Activated CD8-positive, alpha-beta T cell treated with anti-CD3 and anti-CD28 coated beads for 36 hours (primary cell): ENCODE measurements at regions of chr1 and their contacts with region 1.

Region 1: DNA sequence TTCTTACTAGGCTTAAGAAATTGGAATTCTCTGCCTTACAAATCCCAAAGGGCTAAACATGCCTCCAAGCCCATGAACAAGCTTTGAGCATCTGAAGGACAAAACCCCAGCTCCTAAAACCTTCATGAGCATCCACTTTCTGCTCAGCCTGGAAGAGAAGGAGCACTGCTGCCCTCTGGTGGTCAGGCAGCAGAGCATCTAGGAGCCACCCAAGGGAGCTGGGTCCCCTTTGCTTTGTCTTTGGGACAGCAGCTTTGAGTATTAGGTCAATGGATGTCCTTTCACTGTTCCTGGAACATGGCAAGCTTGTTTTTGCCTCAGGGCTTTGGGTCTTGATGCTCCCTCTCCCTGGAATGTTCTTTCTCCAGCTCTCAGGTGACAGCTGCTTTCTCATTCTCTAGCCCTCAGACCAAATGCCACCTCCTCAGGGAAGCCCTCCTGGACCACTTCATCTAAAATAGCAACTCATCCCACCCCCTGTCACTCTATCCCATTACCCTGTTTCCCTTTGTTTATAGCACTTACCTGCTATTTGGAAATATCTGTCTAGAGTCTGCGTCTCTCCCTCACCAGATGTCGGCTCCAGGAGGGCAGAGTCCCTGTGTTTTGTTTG is 25.7 kb downstream of the RAB7B start:
- DNase-seq: peak; percentile 74
- ATAC-seq: peak; percentile 88
- H3K4me3 Mint-ChIP-seq: no peak overlapping the region
- H3K27ac Mint-ChIP-seq: no peak overlapping the region
- H3K4me1 Mint-ChIP-seq: no peaks in the 10 kb centered on the region
- H3K27me3 Mint-ChIP-seq: peaks cover 1% of the 10 kb centered on the region
- CTCF ChIP-seq: peak; percentile 87

Region 2: GRCh38 chr1:205729945-205730610 is 247.4 kb before region 1 on chr1:
- CTCF ChIA-PET with region 1: interaction called, 11 read pairs
- POLR2A ChIA-PET with region 1: no interaction called
- intact Hi-C with region 1: no loop called
- DNase-seq: no peak
- ATAC-seq: no peak
- H3K4me3 Mint-ChIP-seq: no peak overlapping the region
- H3K27ac Mint-ChIP-seq: no peak overlapping the region
- H3K4me1 Mint-ChIP-seq: peaks cover 42% of the 10 kb centered on the region
- H3K27me3 Mint-ChIP-seq: no peaks in the 10 kb centered on the region
- CTCF ChIP-seq: no peak

Region 3: DNA sequence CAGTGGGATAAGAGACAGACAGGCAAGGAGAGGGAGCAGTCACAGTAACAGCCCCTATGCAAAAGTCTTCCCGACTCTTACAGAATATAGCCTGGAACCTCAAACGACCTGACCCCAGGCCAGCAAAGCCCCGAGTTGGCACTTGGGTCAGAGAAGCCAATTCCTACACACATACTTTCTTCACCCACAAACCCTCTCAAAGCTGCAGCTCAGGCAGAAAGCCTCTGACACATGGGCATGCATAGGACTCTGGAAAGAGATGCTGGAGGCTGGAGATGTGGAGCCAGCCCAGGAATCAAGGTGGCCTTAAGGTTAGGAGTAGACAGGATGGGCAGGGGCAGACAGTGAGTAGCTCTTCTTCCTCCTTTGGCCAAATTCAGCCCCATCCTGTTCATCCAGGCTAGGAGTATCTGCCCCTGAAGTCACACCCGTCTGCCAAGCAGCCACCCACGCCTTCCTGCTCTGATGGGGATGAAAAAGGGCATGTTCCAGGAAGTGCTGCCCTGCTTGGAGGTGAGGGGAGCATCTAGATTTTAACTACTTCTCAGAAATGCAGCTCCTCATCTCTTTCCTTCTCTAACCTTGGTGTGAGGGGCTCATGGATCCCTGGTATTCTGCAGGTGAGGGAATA is 172.3 kb before region 1 on chr1:
- CTCF ChIA-PET with region 1: interaction called, 16 read pairs
- POLR2A ChIA-PET with region 1: no interaction called
- intact Hi-C with region 1: no loop called
- DNase-seq: peak; percentile 84
- ATAC-seq: peak; percentile 92
- H3K4me3 Mint-ChIP-seq: peak overlapping the region; percentile 69
- H3K27ac Mint-ChIP-seq: peak overlapping the region; percentile 93
- H3K4me1 Mint-ChIP-seq: peaks cover 59% of the 10 kb centered on the region
- H3K27me3 Mint-ChIP-seq: no peaks in the 10 kb centered on the region
- CTCF ChIP-seq: no peak

Region 4: GRCh38 chr1:205919026-205919746 is 58.3 kb before region 1 on chr1:
- CTCF ChIA-PET with region 1: interaction called, 260 read pairs
- POLR2A ChIA-PET with region 1: no interaction called
- intact Hi-C with region 1: loop called (anchors 1 kb)
- DNase-seq: peak; percentile 88
- ATAC-seq: peak; percentile 95
- H3K4me3 Mint-ChIP-seq: no peak overlapping the region
- H3K27ac Mint-ChIP-seq: no peak overlapping the region
- H3K4me1 Mint-ChIP-seq: no peaks in the 10 kb centered on the region
- H3K27me3 Mint-ChIP-seq: no peaks in the 10 kb centered on the region
- CTCF ChIP-seq: peak; percentile 84

Region 5: GRCh38 chr1:205991237-205991636 is 13.7 kb after region 1 on chr1:
- CTCF ChIA-PET with region 1: interaction called, 40 read pairs
- POLR2A ChIA-PET with region 1: no interaction called
- intact Hi-C with region 1: no loop called
- DNase-seq: no peak
- ATAC-seq: no peak
- H3K4me3 Mint-ChIP-seq: no peak overlapping the region
- H3K27ac Mint-ChIP-seq: no peak overlapping the region
- H3K4me1 Mint-ChIP-seq: no peaks in the 10 kb centered on the region
- H3K27me3 Mint-ChIP-seq: peaks cover 3% of the 10 kb centered on the region
- CTCF ChIP-seq: no peak